Activated naive CD4-positive, alpha-beta T cell treated with anti-CD3 and anti-CD28 coated beads for 36 hours (primary cell): ENCODE measurements at regions of chr13 and their contacts with region 1.

Region 1: GRCh38 chr13:20703780-20704445 is 414 bp downstream of the IL17D start:
- DNase-seq: peak; percentile 72
- H3K4me3 Mint-ChIP-seq: no peak overlapping the region
- H3K27ac Mint-ChIP-seq: no peak overlapping the region
- H3K4me1 Mint-ChIP-seq: peaks cover 5% of the 10 kb centered on the region
- H3K27me3 Mint-ChIP-seq: peaks cover 13% of the 10 kb centered on the region

Region 2: DNA sequence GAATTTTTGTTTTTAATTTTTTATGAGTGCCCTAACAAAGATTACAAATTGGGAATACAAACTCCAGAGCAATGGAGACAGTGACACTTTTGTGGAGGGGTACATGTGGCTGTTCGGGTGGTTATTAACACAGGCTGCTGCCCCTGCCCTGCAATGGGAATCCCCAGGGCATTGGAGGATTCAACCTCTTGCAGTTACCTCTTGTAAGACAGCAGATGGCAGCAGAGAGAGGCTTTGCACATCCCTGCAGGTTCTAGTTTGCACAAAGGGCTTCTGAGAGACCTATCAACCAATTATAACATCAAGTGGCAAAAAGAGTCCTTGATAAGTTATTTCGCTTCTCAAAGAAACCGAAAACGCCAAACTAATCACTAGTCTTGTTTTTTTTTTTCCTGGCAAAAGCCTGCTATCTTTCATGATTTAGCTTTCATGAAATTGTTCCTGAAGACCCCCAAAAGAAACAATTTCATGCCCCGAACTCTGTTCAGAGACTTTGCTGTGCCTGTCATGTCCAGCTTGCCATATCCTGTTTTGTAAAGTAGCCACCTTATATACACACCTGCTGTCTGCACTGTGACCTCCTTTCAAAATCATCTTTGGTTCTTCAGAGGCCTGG is 521.6 kb before region 1 on chr13:
- CTCF ChIA-PET with region 1: no interaction called
- intact Hi-C with region 1: loop called (anchors 1 kb)
- DNase-seq: peak; percentile 54
- H3K4me3 Mint-ChIP-seq: no peak overlapping the region
- H3K27ac Mint-ChIP-seq: no peak overlapping the region
- H3K4me1 Mint-ChIP-seq: no peaks in the 10 kb centered on the region
- H3K27me3 Mint-ChIP-seq: peaks cover 30% of the 10 kb centered on the region

Region 3: DNA sequence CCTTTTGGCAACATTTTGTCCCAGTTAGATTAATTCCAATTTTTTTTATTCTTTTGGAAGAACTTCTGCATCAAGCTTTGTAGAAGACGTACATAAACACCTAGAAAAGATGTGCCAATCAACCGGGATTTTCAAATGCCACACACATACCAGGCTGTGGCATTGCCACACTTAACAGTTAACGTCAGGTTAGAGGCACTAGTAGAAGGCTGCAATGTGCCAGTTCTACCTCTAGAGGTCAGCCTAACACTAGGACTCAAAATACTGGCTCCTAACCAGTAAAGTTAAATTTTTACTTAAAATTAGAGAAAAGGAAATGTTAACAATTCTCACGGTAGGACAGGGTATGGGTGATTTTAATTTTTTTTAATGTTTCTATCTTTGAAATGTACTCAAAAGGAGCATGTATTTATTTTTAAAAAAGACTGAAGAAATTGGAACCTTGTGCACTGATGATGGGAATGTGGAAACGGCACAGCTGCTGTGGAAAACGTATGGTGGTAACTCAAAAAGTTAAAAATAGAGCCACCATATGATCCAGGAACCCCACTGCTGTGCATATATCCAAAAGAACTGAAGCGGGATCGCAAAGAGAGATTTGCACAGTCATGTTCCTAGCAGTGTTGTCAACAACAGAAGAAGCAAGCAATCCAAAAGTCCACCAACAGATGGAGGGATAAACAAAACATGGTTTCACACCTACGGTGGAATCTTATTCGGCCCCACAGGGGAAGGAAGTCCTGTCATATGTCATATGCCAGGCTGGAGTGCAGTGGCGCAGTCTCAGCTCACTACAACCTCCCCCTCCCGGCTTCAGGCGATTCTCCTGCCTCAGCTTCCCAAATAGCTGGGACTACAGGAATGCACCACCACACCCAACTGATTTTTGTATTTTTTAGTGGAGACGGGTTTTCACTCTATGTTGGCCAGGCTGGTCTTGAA is 208.6 kb before region 1 on chr13:
- CTCF ChIA-PET with region 1: interaction called, 7 read pairs
- intact Hi-C with region 1: loop called (anchors 2 kb)
- DNase-seq: peak; percentile 81
- H3K4me3 Mint-ChIP-seq: no peak overlapping the region
- H3K27ac Mint-ChIP-seq: no peak overlapping the region
- H3K4me1 Mint-ChIP-seq: no peaks in the 10 kb centered on the region
- H3K27me3 Mint-ChIP-seq: no peaks in the 10 kb centered on the region

Region 4: DNA sequence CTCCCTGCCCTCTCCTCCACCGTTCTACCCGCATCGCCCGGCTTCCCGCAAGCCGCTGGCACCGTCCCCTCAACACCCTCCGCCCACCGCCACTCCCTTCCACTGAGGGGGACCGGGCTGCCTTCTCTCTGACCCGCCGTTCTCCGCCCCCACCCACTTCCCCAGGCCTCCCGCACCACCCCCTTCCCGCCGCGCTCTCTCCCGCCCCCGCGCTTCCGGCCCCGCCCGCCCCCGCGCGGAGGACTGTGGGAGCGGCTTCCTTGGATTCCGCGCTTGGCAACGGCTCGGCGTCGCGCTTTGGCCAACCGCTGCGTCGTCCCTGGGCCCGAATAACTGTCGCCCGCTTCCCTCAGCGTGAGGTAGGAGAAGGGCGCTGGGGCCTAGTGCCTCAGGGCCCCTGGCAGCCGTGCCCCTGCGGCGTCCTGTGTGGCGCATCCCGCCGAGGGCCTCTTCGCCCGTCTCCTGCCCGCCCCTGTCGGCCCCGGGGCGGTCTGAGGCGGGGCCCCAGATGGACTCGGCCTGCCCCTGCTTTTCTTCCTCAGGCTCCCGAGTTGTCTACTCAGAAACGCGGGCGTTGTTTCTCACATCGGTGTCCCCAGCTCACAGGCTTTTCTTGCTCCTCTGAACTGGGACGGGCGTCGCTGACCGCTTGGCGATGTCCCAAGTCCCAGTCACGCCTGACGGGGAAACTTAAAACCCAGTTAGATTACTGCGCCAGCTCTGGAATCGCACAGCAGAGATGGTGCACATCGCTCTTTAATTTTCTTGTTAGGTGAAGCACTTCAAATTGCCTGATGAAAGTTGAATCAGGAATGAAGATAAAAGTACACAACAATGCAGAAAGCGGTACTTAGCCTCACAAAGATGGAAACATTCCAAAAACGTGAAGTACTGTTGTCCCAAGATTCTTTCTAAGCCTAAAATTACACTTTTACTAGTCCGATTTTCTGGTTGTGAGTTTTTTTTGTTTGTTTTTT is 136.7 kb before region 1 on chr13 and contains the start of gene IFT88:
- CTCF ChIA-PET with region 1: interaction called, 3 read pairs
- intact Hi-C with region 1: loop called (anchors 5 kb)
- DNase-seq: peak; percentile 86
- H3K4me3 Mint-ChIP-seq: peak within 1 kb of the TSS; percentile 84
- H3K27ac Mint-ChIP-seq: peak within 1 kb of the TSS; percentile 87
- H3K4me1 Mint-ChIP-seq: peaks cover 23% of the 10 kb centered on the region
- H3K27me3 Mint-ChIP-seq: no peaks in the 10 kb centered on the region
- total RNA-seq, gene IFT88: 2.7 TPM

Region 5: GRCh38 chr13:21603531-21604448 is 899.9 kb after region 1 on chr13 and contains the start of gene MICU2:
- CTCF ChIA-PET with region 1: no interaction called
- intact Hi-C with region 1: loop called (anchors 5 kb)
- DNase-seq: peak; percentile 97
- H3K4me3 Mint-ChIP-seq: peak within 1 kb of the TSS; percentile 84
- H3K27ac Mint-ChIP-seq: peak within 1 kb of the TSS; percentile 90
- H3K4me1 Mint-ChIP-seq: peaks cover 28% of the 10 kb centered on the region
- H3K27me3 Mint-ChIP-seq: peaks cover 3% of the 10 kb centered on the region
- total RNA-seq, gene MICU2: 27.5 to 28.2 TPM